T-cell (primary cell): ENCODE measurements at regions of chr13 and their contacts with region 1.

Region 1: GRCh38 chr13:31909864-31910551 is 121.6 kb upstream of the FRY start:
- DNase-seq: peak in 28 of 35 experiments; percentile 2 to 80 (median 32)
- ATAC-seq: no peak
- H3K4me3 ChIP-seq: no peak overlapping the region
- H3K4me3 Mint-ChIP-seq: no peak overlapping the region
- H3K27ac ChIP-seq: no peak overlapping the region
- H3K27ac Mint-ChIP-seq: no peak overlapping the region
- H3K4me1 ChIP-seq: no peaks in the 10 kb centered on the region
- H3K4me1 Mint-ChIP-seq: peaks cover 0 to 19% (median 0%) of the 10 kb centered on the region in 3 donors
- H3K27me3 ChIP-seq: no peaks in the 10 kb centered on the region
- H3K27me3 Mint-ChIP-seq: peaks cover 2 to 7% of the 10 kb centered on the region in 2 donors

Region 2: GRCh38 chr13:32032759-32033158 is 122.8 kb after region 1 on chr13:
- CTCF ChIA-PET with region 1: no interaction called
- POLR2A ChIA-PET with region 1: no interaction called
- DNase-seq: no peak
- ATAC-seq: no peak
- H3K4me3 ChIP-seq: no peak overlapping the region
- H3K4me3 Mint-ChIP-seq: peak overlapping the region; percentile 49 to 92 (median 52)
- H3K27ac ChIP-seq: no peak overlapping the region
- H3K27ac Mint-ChIP-seq: no peak overlapping the region
- H3K4me1 ChIP-seq: peaks cover 11 to 32% of the 10 kb centered on the region in 2 experiments
- H3K4me1 Mint-ChIP-seq: peaks cover 49 to 73% (median 54%) of the 10 kb centered on the region in 3 donors
- H3K27me3 ChIP-seq: peaks cover 0 to 12% of the 10 kb centered on the region in 2 experiments
- H3K27me3 Mint-ChIP-seq: peaks cover 7 to 20% of the 10 kb centered on the region in 2 donors

Region 3: DNA sequence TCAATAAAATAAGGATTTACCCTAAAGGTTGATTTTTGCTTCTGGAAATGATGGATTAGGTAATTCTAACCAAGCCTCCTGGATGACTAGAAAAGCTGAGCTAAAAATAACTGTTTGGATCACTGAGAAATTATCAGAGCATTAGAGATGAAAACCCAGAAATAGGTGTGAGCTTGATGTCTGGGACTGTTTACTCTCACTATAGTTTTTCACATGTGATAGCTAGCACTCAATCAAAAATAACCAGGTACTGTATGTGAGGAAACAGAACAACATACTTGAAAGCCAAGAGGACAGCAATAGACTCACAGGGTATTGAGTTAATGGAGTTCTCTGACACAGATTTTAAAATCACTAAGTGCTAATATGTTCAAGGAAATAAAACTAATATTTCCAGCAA is 395.6 kb after region 1 on chr13:
- CTCF ChIA-PET with region 1: interaction called, 4 to 10 read pairs
- POLR2A ChIA-PET with region 1: interaction called in 1 of 2 experiments, 3 read pairs
- DNase-seq: no peak
- ATAC-seq: no peak
- H3K4me3 ChIP-seq: no peak overlapping the region
- H3K4me3 Mint-ChIP-seq: no peak overlapping the region
- H3K27ac ChIP-seq: no peak overlapping the region
- H3K27ac Mint-ChIP-seq: no peak overlapping the region
- H3K4me1 ChIP-seq: peaks cover 0 to 4% of the 10 kb centered on the region in 2 experiments
- H3K4me1 Mint-ChIP-seq: peaks cover 9 to 12% (median 10%) of the 10 kb centered on the region in 3 donors
- H3K27me3 ChIP-seq: peaks cover 0 to 5% of the 10 kb centered on the region in 2 experiments
- H3K27me3 Mint-ChIP-seq: peaks cover 0 to 3% of the 10 kb centered on the region in 2 donors